Sigmoid colon (tissue), 7 donors: ENCODE measurements at regions of chr21 and their contacts with region 1.

Region 1: GRCh38 chr21:36319765-36320420 is at the start of gene MORC3:
- DNase-seq: peak; percentile 98
- H3K4me3 ChIP-seq: peak within 1 kb of the TSS; percentile 77 to 94 (median 78)
- H3K27ac ChIP-seq: peak within 1 kb of the TSS; percentile 96 to 99 (median 98)
- H3K4me1 ChIP-seq: peaks cover 0 to 40% (median 35%) of the 10 kb centered on the region in 4 donors
- H3K27me3 ChIP-seq: no peaks in the 10 kb centered on the region
- CTCF ChIP-seq: no peak
- EP300 ChIP-seq: peak in 1 of 4 donors; percentile 29
- POLR2A ChIP-seq: peak; percentile 74 to 86
- total RNA-seq, gene MORC3: 39.5 to 59.8 (median 48.4) TPM

Region 2: DNA sequence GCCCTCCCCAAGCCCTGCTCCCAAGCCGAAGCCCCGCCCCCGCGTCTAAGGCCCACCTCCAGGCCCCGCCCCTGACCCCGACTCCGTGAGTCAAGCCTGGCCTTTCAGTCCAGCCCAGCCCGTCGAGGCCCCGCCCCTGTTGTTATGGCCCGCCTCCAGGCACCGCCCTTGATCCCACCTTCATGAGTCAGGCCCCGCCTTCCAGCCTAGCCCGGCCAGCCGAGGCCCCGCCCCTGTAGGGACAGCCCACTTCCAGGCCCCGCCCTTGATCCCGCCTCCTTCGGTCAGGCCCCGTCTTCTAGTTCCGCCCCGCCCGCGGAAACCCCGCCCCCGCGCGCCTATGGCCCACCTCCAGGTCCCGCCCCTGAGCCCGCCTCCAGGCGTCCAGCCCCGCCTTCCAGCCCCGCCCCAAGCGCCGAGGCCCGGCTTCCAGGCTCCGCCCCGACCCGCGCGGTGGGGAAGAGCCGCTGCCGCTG is 163.5 kb before region 1 on chr21:
- intact Hi-C with region 1: loop called (anchors 1 kb)
- DNase-seq: peak; percentile 100
- H3K4me3 ChIP-seq: peak overlapping the region; percentile 63 to 95 (median 87)
- H3K27ac ChIP-seq: peak overlapping the region; percentile 85 to 88 (median 86)
- H3K4me1 ChIP-seq: peaks cover 0 to 20% (median 11%) of the 10 kb centered on the region in 4 donors
- H3K27me3 ChIP-seq: no peaks in the 10 kb centered on the region
- CTCF ChIP-seq: no peak
- EP300 ChIP-seq: no peak
- POLR2A ChIP-seq: no peak

Region 3: DNA sequence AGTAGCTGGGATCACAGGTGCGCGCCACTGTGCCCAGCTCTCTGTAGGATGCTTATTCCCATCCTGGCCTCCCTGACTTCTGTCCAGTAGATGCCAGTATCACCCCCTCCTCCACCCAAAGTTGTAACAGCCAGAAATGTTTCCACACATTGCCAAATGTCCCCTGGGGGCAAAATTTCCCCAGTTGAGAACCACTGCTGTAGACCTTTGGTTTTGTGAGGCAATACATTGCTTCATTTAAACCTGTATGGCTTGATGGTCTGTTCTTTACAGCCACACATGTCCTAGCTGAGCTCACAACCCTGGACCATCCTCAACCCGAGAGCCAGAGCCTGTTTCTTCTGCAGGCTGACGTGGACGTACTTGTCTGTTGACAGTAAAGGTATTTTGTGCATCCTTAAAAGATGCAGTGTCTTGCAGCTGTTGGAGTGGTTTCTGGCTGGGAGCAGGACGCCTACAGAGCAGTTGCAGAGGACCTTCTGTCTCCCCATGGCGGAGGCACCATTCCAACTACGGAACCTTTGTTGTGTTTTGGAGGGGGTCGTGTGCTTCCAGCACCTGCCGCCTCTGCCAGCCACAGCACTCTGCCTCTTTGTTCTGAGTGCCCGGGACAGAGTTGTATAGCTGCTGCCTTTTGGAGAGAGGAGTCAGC is 136.6 kb before region 1 on chr21:
- intact Hi-C with region 1: no loop called
- DNase-seq: no peak
- H3K4me3 ChIP-seq: no peak overlapping the region
- H3K27ac ChIP-seq: no peak overlapping the region
- H3K4me1 ChIP-seq: peaks cover 0 to 6% (median 3%) of the 10 kb centered on the region in 4 donors
- H3K27me3 ChIP-seq: no peaks in the 10 kb centered on the region
- CTCF ChIP-seq: no peak
- EP300 ChIP-seq: no peak
- POLR2A ChIP-seq: no peak

Region 4: DNA sequence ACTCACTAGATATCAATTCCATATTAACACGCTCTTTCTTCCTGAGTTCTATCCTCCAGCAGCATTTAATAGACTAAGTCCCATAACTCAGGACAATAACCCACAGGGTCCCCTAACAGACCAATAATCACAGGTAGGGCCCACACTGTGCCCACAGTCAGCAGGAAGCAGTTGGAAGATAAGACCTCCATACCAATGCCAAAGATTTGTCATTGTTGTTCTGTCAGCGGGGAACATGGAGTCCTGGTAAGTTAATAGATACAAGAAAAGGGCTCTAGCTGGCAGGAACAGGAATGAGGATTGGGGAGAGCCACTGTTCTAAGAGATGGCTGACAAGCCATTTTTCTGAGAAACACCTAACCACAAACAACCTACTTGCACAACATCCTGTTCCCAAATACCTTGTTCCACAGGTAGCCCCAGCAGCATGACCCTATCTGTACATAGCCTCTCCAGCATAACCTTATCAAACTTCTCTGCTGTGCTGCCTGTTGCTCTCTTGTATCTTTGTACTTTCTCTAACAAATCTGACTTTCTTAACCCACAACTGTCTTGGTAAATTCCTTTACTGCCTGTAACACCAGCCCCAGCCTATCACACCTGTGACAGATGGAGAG is 1794.9 kb after region 1 on chr21:
- intact Hi-C with region 1: no loop called
- DNase-seq: no peak
- H3K4me3 ChIP-seq: no peak overlapping the region
- H3K27ac ChIP-seq: no peak overlapping the region
- H3K4me1 ChIP-seq: no peaks in the 10 kb centered on the region
- H3K27me3 ChIP-seq: no peaks in the 10 kb centered on the region
- CTCF ChIP-seq: no peak
- EP300 ChIP-seq: no peak
- POLR2A ChIP-seq: no peak